Caco-2 (cell line): ENCODE measurements at regions of chr6 and their contacts with region 1.

Region 1: DNA sequence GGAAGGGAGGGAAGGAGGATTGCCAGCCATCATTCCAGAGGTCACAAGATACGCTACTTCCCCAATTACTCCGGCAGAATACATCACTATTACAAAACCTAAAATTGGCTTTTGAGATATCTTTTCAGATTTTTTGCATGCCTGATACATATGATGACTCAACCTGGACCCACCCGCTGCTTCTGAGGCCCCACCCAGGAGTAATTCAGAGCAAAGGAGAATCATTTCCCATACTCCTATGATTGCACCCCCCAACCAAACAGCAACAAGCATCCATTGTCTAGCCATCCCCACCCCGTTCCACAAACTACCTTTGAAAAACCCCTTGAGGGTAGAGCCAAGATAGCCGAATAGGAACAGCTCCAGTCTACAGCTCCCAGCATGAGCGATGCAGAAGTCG is 163.5 kb upstream of the GJE1 start:
- DNase-seq: no peak
- H3K4me3 ChIP-seq: no peak overlapping the region
- H3K4me3 Mint-ChIP-seq: peak overlapping the region; percentile 55
- H3K27ac Mint-ChIP-seq: no peak overlapping the region
- H3K4me1 ChIP-seq: no peaks in the 10 kb centered on the region
- H3K4me1 Mint-ChIP-seq: no peaks in the 10 kb centered on the region
- H3K27me3 ChIP-seq: no peaks in the 10 kb centered on the region
- H3K27me3 Mint-ChIP-seq: no peaks in the 10 kb centered on the region
- CTCF ChIP-seq: no peak

Region 2: DNA sequence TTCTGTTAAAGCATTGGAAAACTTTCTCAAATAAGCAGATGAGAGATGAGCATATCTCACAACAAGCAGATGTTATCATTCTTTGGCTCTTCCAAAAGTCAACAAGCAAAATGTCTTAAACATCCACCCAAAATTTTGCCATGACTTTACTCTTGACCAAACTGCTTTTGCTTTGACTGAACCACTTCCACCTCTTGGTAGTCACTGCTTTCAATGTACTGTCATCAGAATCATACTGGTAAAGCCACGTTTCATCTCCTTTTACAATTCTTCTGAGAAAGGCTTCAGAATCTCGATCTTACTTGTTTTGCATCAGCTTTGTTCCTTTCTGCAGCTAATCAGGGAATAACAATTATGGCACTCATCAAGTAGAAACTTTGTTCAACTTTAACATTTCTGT is 334.9 kb before region 1 on chr6:
- CTCF ChIA-PET with region 1: no interaction called
- POLR2A ChIA-PET with region 1: no interaction called
- intact Hi-C with region 1: loop called (anchors 5 kb)
- DNase-seq: no peak
- H3K4me3 ChIP-seq: no peak overlapping the region
- H3K4me3 Mint-ChIP-seq: no peak overlapping the region
- H3K27ac Mint-ChIP-seq: no peak overlapping the region
- H3K4me1 ChIP-seq: no peaks in the 10 kb centered on the region
- H3K4me1 Mint-ChIP-seq: no peaks in the 10 kb centered on the region
- H3K27me3 ChIP-seq: no peaks in the 10 kb centered on the region
- H3K27me3 Mint-ChIP-seq: no peaks in the 10 kb centered on the region
- CTCF ChIP-seq: no peak